ENCODE measurements at regions of chr11 and their contacts with region 1.

Region 1: GRCh38 chr11:88484873-88485621 is 147.5 kb upstream of the CTSC start:
- DNase-seq: peak; percentile 57
- CTCF ChIP-seq: peak; percentile 55

Region 2: DNA sequence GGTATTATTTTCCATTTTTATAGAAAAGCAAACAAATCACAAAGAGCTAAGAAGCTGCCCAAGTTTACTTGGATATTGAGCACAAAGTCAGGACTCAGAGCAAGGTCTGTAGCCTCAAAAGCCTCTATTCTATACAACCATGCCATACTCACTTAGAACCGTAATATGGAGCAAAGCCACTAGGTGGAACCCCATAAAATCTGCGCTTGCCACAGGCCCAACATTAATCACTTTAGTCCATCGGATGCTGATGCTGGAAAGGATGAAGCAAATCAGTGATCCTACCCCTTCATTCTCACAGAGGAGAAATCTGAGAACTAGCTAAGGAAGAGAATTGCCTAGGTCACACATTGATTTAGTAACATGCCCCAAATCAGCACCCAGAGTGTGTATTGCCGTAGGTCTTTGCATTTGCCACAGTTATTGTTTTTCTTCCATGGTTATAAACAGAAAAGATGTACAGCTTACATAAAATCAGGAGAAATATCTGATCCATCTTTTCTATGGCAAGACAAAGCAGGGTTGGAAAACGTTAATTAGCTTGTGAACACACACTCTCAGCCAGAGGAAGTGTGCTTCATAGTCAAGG is 253.1 kb before region 1 on chr11:
- CTCF ChIA-PET with region 1: no interaction called
- POLR2A ChIA-PET with region 1: no interaction called
- DNase-seq: peak; percentile 38
- CTCF ChIP-seq: peak; percentile 28

Region 3: GRCh38 chr11:88474655-88475054 is 10.4 kb before region 1 on chr11:
- CTCF ChIA-PET with region 1: interaction called, 10 read pairs
- POLR2A ChIA-PET with region 1: no interaction called
- DNase-seq: no peak
- CTCF ChIP-seq: no peak

Region 4: GRCh38 chr11:88501541-88501940 is 16.5 kb after region 1 on chr11:
- CTCF ChIA-PET with region 1: interaction called, 18 read pairs
- POLR2A ChIA-PET with region 1: no interaction called
- DNase-seq: no peak
- CTCF ChIP-seq: no peak

Region 5: GRCh38 chr11:89235976-89236375 is 750.9 kb after region 1 on chr11:
- CTCF ChIA-PET with region 1: no interaction called
- POLR2A ChIA-PET with region 1: no interaction called
- DNase-seq: no peak
- CTCF ChIP-seq: no peak

Measured in GM10248 (cell line).